IMR-90 (cell line): ENCODE measurements at regions of chr16 and their contacts with region 1.

Region 1: DNA sequence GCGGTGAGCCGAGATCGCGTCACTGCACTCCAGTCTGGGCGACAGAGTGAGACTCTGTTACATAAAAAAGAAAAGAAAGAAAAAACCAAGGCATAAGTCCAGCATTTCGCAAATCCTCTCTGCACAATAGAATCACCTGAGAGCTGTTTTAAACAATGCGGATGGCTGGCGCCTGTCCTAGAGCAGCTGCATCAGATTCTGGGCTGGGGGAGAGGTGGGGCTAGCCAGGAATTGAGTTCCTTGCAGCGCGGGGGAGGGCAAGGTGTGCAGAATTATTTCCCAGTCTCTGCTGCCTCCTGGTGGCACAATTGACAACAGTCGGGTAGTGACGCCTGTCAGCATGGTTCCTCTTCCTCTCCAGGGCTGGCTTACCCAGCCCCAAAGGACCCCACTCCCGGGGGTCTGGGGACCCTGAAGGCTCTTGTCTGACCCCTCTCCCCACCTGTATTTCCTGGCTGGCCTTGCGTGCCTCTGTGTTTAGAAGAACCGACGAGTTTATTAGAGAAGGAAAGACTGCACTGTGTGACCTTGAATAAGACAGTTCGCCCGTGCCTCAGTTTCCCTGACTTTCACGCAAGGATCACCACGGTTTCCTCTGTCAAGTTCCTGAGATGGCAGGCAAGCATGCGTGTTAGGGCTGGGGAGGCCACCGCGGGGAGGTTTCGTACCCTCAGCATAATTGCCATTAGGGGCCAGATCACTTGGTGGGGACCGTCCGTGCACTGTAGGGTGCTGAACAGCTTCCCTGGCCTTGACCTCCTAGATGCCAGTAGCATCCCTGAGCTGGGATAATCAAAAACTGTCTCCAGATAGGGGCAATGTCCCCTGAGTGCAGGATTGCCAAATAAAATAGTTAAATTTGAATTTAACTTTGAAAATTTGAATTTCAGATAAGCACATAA is 41.0 kb upstream of the PLCG2 start:
- DNase-seq: peak; percentile 60
- ATAC-seq: peak; percentile 95
- H3K4me3 ChIP-seq: no peak overlapping the region
- H3K27ac ChIP-seq: no peak overlapping the region
- H3K4me1 ChIP-seq: no peaks in the 10 kb centered on the region
- H3K27me3 ChIP-seq: peaks cover 5% of the 10 kb centered on the region; the same call in 1 of the 2 replicates
- CTCF ChIP-seq: peak; percentile 87
- POLR2A ChIP-seq: no peak
- RAD21 ChIP-seq: peak; percentile 90

Region 2: DNA sequence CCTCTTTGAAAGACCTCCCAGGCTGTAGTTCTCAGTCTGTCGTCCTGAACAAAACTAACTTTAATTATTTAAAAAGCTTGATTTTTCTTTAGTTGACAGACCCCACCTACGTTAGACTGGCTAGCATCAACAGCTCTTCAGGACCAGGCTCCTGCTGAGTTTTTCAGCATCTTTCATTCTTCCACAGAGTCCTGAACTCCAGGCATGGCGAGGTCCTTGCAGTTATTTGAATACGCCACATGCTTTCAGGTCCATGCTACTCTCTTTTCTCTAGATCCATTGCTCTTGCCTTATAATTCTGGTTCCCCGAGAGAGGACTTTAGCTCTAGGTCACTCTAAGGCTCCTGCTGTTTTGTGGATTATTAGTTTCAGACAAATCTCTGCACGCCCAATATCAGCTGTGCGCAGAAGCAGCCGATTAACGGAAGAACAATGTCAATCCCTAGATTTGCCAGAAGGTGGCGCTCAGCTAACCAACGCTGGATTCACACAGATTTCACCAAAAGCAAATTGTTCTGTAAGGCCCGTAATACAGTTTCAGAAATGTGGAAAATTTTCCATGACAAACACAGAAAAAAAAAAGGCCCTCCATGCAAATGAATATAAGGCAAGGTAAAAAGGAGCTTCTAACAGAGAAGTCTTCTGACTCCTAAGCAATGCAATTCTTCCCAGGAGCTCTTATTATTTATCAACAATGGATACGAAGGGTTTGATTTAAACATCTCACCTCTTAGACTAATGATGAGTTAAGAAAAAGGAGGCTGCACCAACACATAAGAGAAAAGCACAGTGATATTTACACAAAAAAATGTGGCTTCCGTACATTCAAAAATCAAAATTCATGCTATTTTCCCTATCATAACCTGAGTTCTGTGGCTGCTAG is 533.1 kb before region 1 on chr16:
- CTCF ChIA-PET with region 1: interaction called, 4 read pairs
- POLR2A ChIA-PET with region 1: no interaction called
- dilution Hi-C with region 1: no loop called
- in situ Hi-C with region 1: no loop called
- intact Hi-C with region 1: loop called (anchors 1 kb)
- DNase-seq: peak; percentile 64
- ATAC-seq: peak; percentile 90
- H3K4me3 ChIP-seq: no peak overlapping the region
- H3K27ac ChIP-seq: no peak overlapping the region
- H3K4me1 ChIP-seq: peaks cover 3% of the 10 kb centered on the region; the same call in 1 of the 2 replicates
- H3K27me3 ChIP-seq: peaks cover 24% of the 10 kb centered on the region
- CTCF ChIP-seq: peak; percentile 71
- POLR2A ChIP-seq: no peak
- RAD21 ChIP-seq: peak; percentile 64